CD8-positive, alpha-beta T cell (primary cell): ENCODE measurements at regions of chr13 and their contacts with region 1.

Region 1: GRCh38 chr13:108155185-108156106 is 59.9 kb downstream of the LIG4 start:
- DNase-seq: peak; percentile 20 to 61 (median 54)
- ATAC-seq: no peak
- H3K4me3 ChIP-seq: no peak overlapping the region
- H3K4me3 Mint-ChIP-seq: no peak overlapping the region
- H3K27ac ChIP-seq: no peak overlapping the region
- H3K27ac Mint-ChIP-seq: no peak overlapping the region
- H3K4me1 ChIP-seq: no peaks in the 10 kb centered on the region
- H3K4me1 Mint-ChIP-seq: no peaks in the 10 kb centered on the region
- H3K27me3 ChIP-seq: peaks cover 0 to 2% of the 10 kb centered on the region in 2 experiments
- H3K27me3 Mint-ChIP-seq: peaks cover 17% of the 10 kb centered on the region
- CTCF ChIP-seq: peak; percentile 98

Region 2: GRCh38 chr13:107205303-107206104 is 949.9 kb before region 1 on chr13:
- CTCF ChIA-PET with region 1: interaction called, 7 read pairs
- POLR2A ChIA-PET with region 1: no interaction called
- intact Hi-C with region 1: loop called in 1 of 2 experiments (anchors 1 kb)
- DNase-seq: peak in 7 of 9 experiments; percentile 23 to 65 (median 44)
- ATAC-seq: peak; percentile 69
- H3K4me3 ChIP-seq: no peak overlapping the region
- H3K4me3 Mint-ChIP-seq: no peak overlapping the region
- H3K27ac ChIP-seq: no peak overlapping the region
- H3K27ac Mint-ChIP-seq: no peak overlapping the region
- H3K4me1 ChIP-seq: no peaks in the 10 kb centered on the region
- H3K4me1 Mint-ChIP-seq: no peaks in the 10 kb centered on the region
- H3K27me3 ChIP-seq: no peaks in the 10 kb centered on the region
- H3K27me3 Mint-ChIP-seq: peaks cover 5% of the 10 kb centered on the region
- CTCF ChIP-seq: peak; percentile 92

Region 3: DNA sequence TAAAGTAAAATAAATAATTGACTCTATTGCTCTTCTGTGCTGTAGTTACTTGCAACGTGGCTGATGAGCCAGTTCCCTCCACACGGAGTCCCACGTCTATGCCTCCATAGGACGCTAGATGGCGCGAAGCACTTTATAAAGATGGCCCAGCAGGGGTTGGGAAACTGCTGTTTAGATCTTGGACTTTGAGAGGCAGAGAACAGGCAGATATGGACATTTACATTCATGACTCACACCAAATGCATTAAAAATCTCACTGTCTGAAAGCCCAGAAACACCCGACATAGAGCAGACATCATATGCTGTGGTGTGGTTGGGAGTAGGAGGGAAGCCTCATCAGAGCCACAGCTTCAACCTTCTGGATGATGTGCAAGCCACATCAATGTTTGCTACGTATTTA is 944.4 kb before region 1 on chr13:
- CTCF ChIA-PET with region 1: interaction called, 8 read pairs
- POLR2A ChIA-PET with region 1: no interaction called
- intact Hi-C with region 1: loop called in 1 of 2 experiments (anchors 1 kb)
- DNase-seq: peak in 6 of 9 experiments; percentile 5 to 52 (median 28)
- ATAC-seq: no peak
- H3K4me3 ChIP-seq: no peak overlapping the region
- H3K4me3 Mint-ChIP-seq: no peak overlapping the region
- H3K27ac ChIP-seq: no peak overlapping the region
- H3K27ac Mint-ChIP-seq: no peak overlapping the region
- H3K4me1 ChIP-seq: no peaks in the 10 kb centered on the region
- H3K4me1 Mint-ChIP-seq: no peaks in the 10 kb centered on the region
- H3K27me3 ChIP-seq: no peaks in the 10 kb centered on the region
- H3K27me3 Mint-ChIP-seq: peaks cover 6% of the 10 kb centered on the region
- CTCF ChIP-seq: peak; percentile 64

Region 4: GRCh38 chr13:108113407-108113806 is 42.0 kb before region 1 on chr13:
- CTCF ChIA-PET with region 1: no interaction called
- POLR2A ChIA-PET with region 1: no interaction called
- intact Hi-C with region 1: no loop called
- DNase-seq: no peak
- ATAC-seq: no peak
- H3K4me3 ChIP-seq: no peak overlapping the region
- H3K4me3 Mint-ChIP-seq: no peak overlapping the region
- H3K27ac ChIP-seq: no peak overlapping the region
- H3K27ac Mint-ChIP-seq: no peak overlapping the region
- H3K4me1 ChIP-seq: no peaks in the 10 kb centered on the region
- H3K4me1 Mint-ChIP-seq: no peaks in the 10 kb centered on the region
- H3K27me3 ChIP-seq: no peaks in the 10 kb centered on the region
- H3K27me3 Mint-ChIP-seq: no peaks in the 10 kb centered on the region
- CTCF ChIP-seq: no peak

Region 5: DNA sequence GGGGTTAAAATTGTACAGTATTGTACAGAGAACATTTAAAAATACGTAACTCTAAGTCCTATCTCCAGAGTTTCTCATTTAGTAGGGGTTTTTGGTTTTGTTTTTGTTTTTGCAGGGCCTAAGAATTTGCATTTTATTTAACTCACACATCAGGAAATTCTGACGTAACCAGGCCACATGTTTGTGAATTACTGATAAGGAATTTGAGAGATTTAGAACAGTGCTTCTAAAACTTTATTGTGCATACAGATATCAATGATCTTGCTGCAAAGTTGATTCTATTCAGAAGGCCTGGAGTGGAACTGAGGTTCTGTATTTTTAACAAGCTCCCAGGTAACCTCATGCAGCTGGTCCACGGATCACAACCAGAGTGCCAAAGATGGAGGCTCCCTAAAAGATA is 10.6 kb after region 1 on chr13:
- CTCF ChIA-PET with region 1: interaction called, 18 read pairs
- POLR2A ChIA-PET with region 1: no interaction called
- intact Hi-C with region 1: no loop called
- DNase-seq: no peak
- ATAC-seq: no peak
- H3K4me3 ChIP-seq: no peak overlapping the region
- H3K4me3 Mint-ChIP-seq: no peak overlapping the region
- H3K27ac ChIP-seq: no peak overlapping the region
- H3K27ac Mint-ChIP-seq: no peak overlapping the region
- H3K4me1 ChIP-seq: no peaks in the 10 kb centered on the region
- H3K4me1 Mint-ChIP-seq: no peaks in the 10 kb centered on the region
- H3K27me3 ChIP-seq: no peaks in the 10 kb centered on the region
- H3K27me3 Mint-ChIP-seq: peaks cover 11% of the 10 kb centered on the region
- CTCF ChIP-seq: no peak